ENCODE measurements at regions of chr1 and their contacts with region 1.

Region 1: GRCh38 chr1:117059678-117060440 is at the start of gene TTF2:
- DNase-seq: peak; percentile 97
- ATAC-seq: peak; percentile 91
- H3K4me3 Mint-ChIP-seq: no peak within 1 kb of the TSS
- H3K27ac Mint-ChIP-seq: no peak within 1 kb of the TSS
- H3K4me1 Mint-ChIP-seq: peaks cover 47% of the 10 kb centered on the region
- H3K27me3 Mint-ChIP-seq: no peaks in the 10 kb centered on the region
- CTCF ChIP-seq: no peak
- total RNA-seq, gene TTF2: 126 to 127 TPM

Region 2: DNA sequence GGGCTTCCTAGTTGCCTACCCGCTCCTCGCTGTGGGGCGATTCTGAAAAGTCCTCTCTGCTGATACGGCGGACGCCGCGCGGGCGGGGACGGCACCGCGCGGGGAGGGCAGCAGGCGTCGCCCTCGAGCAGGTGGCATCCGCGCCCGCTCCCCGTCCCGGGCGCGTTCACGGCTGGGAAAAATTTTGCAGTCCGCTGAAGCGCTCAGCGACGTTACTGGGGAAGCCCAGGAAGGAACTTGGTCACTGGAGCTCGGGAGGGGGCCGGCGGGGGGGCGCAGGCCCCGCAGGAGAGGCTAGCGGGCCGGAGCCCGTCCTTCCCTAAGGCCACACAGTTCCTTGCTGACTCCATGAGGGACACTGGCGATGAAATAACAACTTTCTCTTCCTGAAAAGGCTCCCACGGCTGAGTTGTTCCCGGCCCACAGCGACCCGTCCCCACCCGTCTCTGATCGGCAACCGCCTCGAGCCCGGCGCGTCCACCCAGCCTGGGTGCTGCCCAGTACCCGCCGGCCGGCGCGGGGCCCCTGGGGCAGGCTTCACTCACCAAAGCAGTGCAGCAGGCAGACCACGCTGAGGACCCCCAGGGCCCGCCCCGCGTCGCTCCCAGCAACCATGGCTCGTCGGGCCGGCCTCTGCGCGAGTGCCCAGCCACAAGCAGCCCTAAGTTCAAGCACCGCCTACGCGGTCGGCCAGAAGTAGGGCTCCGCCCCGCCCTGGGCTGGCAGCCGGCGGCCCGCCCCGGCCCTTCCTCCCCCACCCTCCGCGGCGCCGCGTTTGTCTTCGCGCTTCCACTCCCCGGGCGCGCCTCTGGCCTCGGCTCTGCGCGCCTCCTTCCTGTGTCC is 489.3 kb before region 1 on chr1 and contains the start of gene CD58:
- CTCF ChIA-PET with region 1: interaction called, 7 read pairs
- POLR2A ChIA-PET with region 1: interaction called, 9 read pairs
- intact Hi-C with region 1: loop called (anchors 2 kb)
- DNase-seq: peak; percentile 94
- ATAC-seq: peak; percentile 84
- H3K4me3 Mint-ChIP-seq: peak within 1 kb of the TSS; percentile 91
- H3K27ac Mint-ChIP-seq: peak within 1 kb of the TSS; percentile 88
- H3K4me1 Mint-ChIP-seq: peaks cover 55% of the 10 kb centered on the region
- H3K27me3 Mint-ChIP-seq: peaks cover 8% of the 10 kb centered on the region
- CTCF ChIP-seq: peak; percentile 85
- total RNA-seq, gene CD58: 11.1 to 12.7 TPM

Region 3: DNA sequence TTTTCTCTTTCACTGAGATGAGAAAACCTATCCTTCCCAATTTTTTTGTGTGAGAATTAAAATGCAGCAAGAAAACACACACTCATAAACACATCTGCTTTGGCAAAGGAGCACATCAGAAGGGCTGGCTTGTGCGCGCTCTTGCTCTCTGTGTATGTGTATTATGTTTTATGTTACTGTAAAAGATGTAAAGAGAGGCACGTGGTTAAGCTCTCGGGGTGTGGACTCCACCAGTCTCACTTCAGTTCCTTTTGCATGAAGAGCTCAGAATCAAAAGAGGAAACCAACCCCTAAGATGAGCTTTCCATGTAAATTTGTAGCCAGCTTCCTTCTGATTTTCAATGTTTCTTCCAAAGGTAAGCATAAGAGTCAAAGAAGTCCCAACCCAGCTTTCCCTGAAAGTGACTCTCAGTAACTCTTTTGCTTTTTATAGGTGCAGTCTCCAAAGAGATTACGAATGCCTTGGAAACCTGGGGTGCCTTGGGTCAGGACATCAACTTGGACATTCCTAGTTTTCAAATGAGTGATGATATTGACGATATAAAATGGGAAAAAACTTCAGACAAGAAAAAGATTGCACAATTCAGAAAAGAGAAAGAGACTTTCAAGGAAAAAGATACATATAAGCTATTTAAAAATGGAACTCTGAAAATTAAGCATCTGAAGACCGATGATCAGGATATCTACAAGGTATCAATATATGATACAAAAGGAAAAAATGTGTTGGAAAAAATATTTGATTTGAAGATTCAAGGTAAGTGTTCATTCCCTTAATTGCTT is 305.5 kb before region 1 on chr1 and contains the start of gene CD2:
- CTCF ChIA-PET with region 1: interaction called, 5 read pairs
- POLR2A ChIA-PET with region 1: interaction called, 108 read pairs
- intact Hi-C with region 1: no loop called
- DNase-seq: peak; percentile 81
- ATAC-seq: peak; percentile 78
- H3K4me3 Mint-ChIP-seq: peak within 1 kb of the TSS; percentile 98
- H3K27ac Mint-ChIP-seq: peak within 1 kb of the TSS; percentile 99
- H3K4me1 Mint-ChIP-seq: peaks cover 23% of the 10 kb centered on the region
- H3K27me3 Mint-ChIP-seq: no peaks in the 10 kb centered on the region
- CTCF ChIP-seq: no peak
- total RNA-seq, gene CD2: 217 to 220 TPM

Region 4: DNA sequence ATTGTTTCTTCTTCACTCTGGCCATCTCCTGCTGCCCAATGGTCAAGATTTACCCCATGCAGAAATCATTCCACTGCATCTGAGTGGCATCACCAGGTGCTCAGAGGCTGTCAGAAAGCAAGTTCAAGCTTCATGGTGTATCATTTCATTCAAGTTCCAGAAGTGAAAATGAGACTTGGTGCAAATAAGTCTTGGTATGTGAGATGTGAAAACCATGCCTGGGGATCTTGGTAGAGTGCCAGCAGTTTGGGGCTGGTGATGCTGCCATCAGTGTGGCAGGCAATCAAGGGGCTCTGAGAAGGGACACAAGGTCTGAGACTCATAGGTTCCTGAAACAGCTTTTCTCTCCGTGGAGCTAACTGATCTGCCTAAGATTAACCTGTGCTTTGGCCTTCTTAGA is 253.6 kb before region 1 on chr1:
- CTCF ChIA-PET with region 1: interaction called, 4 read pairs
- POLR2A ChIA-PET with region 1: interaction called, 13 read pairs
- intact Hi-C with region 1: no loop called
- DNase-seq: peak; percentile 93
- ATAC-seq: peak; percentile 68
- H3K4me3 Mint-ChIP-seq: peak overlapping the region; percentile 94
- H3K27ac Mint-ChIP-seq: peak overlapping the region; percentile 91
- H3K4me1 Mint-ChIP-seq: peaks cover 78% of the 10 kb centered on the region
- H3K27me3 Mint-ChIP-seq: no peaks in the 10 kb centered on the region
- CTCF ChIP-seq: no peak

Region 5: GRCh38 chr1:116987256-116987555 is 72.7 kb before region 1 on chr1:
- CTCF ChIA-PET with region 1: interaction called, 3 read pairs
- POLR2A ChIA-PET with region 1: interaction called, 7 read pairs
- intact Hi-C with region 1: loop called (anchors 5 kb)
- DNase-seq: peak; percentile 79
- ATAC-seq: peak; percentile 78
- H3K4me3 Mint-ChIP-seq: peak overlapping the region; percentile 69
- H3K27ac Mint-ChIP-seq: peak overlapping the region; percentile 97
- H3K4me1 Mint-ChIP-seq: peaks cover 57% of the 10 kb centered on the region
- H3K27me3 Mint-ChIP-seq: no peaks in the 10 kb centered on the region
- CTCF ChIP-seq: no peak

Region 6: DNA sequence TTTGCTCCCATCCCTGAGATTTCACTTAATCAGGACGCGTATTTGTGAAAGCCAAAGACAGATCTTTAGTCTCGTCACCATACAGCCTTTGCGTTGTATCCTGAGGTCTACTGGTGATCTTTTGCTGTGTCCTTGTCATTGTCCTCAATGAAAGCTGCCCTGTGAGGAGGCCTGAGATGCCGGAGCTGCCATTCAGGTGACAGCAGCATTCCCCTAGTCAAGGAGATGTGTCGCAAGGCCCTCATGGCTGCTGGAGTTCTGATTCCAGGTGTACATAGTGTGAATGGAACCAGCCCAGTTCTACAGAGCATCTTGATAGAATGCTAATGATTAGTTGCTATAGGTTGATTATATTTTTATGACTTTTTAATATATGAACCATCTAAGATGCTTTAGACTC is 24.4 kb after region 1 on chr1:
- CTCF ChIA-PET with region 1: interaction called, 3 read pairs
- POLR2A ChIA-PET with region 1: interaction called, 13 read pairs
- intact Hi-C with region 1: no loop called
- DNase-seq: no peak
- ATAC-seq: no peak
- H3K4me3 Mint-ChIP-seq: no peak overlapping the region
- H3K27ac Mint-ChIP-seq: peak overlapping the region; percentile 86
- H3K4me1 Mint-ChIP-seq: peaks cover 23% of the 10 kb centered on the region
- H3K27me3 Mint-ChIP-seq: no peaks in the 10 kb centered on the region
- CTCF ChIP-seq: no peak

Measured in activated CD8-positive, alpha-beta T cell treated with anti-CD3 and anti-CD28 coated beads for 36 hours (primary cell).